Posterior cingulate gyrus (tissue), 11 donors: ENCODE measurements at regions of chr14 and their contacts with region 1.

Region 1: DNA sequence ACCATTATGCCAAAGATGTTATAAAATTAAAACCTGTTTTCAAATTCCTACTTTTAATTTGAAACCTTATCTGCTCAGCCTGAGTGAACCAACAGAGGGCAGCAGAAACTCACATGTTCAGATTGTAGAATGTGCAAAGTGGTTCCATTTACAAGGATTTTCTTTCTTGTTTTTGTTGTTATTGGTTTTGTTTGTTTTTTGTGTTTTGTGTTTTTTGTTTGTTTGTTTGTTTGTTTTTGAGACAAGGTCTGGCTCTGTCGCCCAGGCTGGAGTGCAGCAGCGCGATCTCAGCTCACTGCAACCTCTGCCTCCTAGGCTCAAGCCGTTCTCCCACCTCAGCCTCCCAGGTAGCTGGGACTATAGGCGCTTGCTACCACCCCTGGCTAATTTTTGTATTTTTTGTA is 22.8 kb upstream of the GARIN2 start:
- DNase-seq: peak in 4 of 10 donors; percentile 18 to 44 (median 28)

Region 2: GRCh38 chr14:66117585-66117984 is 1048.9 kb before region 1 on chr14:
- intact Hi-C with region 1: no loop called
- DNase-seq: no peak

Region 3: DNA sequence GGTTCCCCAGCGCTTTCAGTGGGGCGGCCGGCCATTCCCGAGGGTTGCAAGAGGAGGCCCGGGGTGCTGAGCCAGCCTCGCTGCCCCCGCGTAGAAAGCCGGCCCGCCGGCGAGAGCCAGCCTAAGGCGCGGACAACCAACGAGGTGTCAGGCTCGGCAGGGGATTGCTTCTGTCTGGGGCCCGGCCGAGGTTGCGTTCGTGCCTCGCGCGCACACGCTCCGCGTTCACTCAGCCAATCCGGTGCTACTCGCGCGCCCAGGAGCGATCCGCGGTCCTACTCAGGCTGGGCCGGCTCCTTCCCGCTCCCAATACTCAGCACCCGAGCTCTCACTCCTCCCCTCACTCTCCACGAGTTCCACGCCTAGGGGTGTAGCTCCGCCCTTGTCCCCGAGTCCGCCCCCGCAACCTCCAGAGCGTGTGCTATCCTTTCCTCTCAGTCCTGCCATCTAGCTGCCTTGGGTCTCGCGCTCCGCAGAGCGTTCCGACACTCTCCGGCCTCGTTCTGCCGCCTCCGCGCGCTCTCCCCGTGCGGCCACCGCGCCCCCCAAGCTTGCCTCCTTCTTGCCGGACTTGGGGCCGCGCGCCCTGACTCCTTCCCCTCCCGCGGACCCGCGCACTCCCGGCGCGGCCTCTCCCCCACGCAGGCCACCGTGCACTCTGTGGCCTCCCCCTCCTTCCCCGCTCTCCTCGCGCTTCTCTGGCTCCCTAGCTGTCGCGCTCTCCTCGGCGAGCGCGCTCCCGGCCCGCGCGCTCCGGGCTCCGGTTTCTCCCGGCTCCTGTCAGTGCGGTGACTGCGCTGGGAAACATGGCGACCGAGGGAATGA is 658.5 kb before region 1 on chr14 and contains the start of gene GPHN:
- intact Hi-C with region 1: no loop called
- DNase-seq: peak; percentile 93 to 99 (median 96)

Region 4: GRCh38 chr14:67285876-67286452 is 119.5 kb after region 1 on chr14:
- intact Hi-C with region 1: loop called (anchors 1 kb)
- DNase-seq: no peak

Region 5: DNA sequence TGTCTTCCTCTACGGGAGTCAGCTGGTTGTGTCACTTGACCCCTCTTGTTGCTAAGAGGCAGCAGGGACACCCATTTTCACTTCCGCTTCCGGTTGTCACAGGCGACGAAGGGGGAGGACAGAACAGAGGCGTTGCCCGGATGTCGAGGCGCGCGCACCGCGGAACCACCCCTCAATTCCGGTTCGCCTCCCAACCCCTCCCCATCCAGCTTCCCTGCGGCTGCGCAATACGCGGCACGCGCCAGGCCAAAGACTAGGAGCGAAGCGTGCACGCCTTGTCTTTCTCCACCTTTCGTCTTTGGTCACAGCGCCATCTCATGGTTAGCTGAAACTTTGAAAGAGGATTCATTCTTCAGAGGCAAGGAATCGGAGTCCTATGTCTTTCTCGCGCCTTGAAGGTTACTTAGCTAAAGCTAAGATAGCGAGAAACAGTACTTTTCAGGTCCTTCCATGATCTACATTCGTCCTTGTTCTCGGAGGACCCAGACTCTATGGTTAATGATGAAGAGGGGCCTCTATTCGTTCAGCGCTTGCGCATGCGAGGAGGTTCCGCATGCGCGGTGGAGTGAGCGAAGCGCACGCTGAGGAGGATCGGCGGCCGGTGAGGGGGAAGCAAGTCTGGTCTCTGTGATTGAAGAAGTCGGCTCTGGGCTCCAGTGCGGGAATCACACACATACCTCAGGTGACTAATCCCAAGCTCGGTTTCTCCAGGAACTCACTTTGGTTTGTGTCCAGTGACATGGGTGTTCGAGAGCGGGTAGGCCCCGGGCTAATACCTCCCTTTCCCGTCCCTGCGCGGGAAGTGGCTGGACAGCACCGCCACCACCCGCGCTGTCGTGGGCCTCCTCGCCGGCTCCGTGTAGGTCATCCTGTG is 193.6 kb after region 1 on chr14 and contains the starts of genes ATP6V1D and EIF2S1:
- intact Hi-C with region 1: loop called (anchors 10 kb)
- DNase-seq: peak; percentile 98 to 100 (median 99)